ENCODE measurements at regions of chr3 and their contacts with region 1.

Region 1: GRCh38 chr3:112832735-112833134 is 13.9 kb downstream of the CD200R1L start:
- DNase-seq: no peak
- H3K4me3 ChIP-seq: no peak overlapping the region
- H3K27ac ChIP-seq: no peak overlapping the region
- H3K4me1 ChIP-seq: no peaks in the 10 kb centered on the region
- H3K27me3 ChIP-seq: peaks cover 0 to 2% of the 10 kb centered on the region in 2 experiments
- CTCF ChIP-seq: no peak
- POLR2A ChIP-seq: no peak

Region 2: GRCh38 chr3:112405845-112406244 is 426.9 kb before region 1 on chr3:
- CTCF ChIA-PET with region 1: no interaction called
- POLR2A ChIA-PET with region 1: no interaction called
- dilution Hi-C with region 1: no loop called
- intact Hi-C with region 1: loop called (anchors 5 kb)
- DNase-seq: no peak
- H3K4me3 ChIP-seq: no peak overlapping the region
- H3K27ac ChIP-seq: no peak overlapping the region
- H3K4me1 ChIP-seq: no peaks in the 10 kb centered on the region
- H3K27me3 ChIP-seq: no peaks in the 10 kb centered on the region
- CTCF ChIP-seq: no peak
- POLR2A ChIP-seq: no peak

Region 3: GRCh38 chr3:112948346-112948838 is 115.7 kb after region 1 on chr3:
- CTCF ChIA-PET with region 1: no interaction called
- POLR2A ChIA-PET with region 1: no interaction called
- dilution Hi-C with region 1: no loop called
- intact Hi-C with region 1: loop called (anchors 10 kb)
- DNase-seq: no peak
- H3K4me3 ChIP-seq: no peak overlapping the region
- H3K27ac ChIP-seq: no peak overlapping the region
- H3K4me1 ChIP-seq: no peaks in the 10 kb centered on the region
- H3K27me3 ChIP-seq: peaks cover 1 to 2% of the 10 kb centered on the region in 2 experiments
- CTCF ChIP-seq: no peak
- POLR2A ChIP-seq: no peak

Measured in endothelial cell of umbilical vein (primary cell).